MCF 10A (cell line): ENCODE measurements at regions of chr2 and their contacts with region 1.

Region 1: DNA sequence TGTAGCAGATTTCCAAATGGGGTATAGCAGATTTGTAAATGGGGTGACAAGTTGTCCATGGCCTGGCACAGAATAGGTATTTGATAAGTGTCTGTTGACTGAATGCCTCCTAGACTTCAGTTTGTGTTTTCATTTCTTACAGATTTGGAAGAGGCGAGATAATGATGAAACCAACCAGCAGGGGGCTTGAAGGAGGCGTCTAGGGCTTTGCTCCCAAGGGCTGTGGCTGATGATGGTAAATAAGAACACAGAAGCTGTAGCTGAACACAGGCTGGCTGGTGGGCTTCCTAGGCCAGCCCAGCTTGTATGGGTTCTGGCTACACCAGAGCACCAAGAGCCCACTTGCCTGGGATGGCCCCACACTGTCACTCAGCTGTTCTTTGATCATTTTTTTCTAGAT is 19.4 kb downstream of the SFTPB start:
- DNase-seq: peak; percentile 69
- H3K4me3 Mint-ChIP-seq: no peak overlapping the region
- H3K27ac Mint-ChIP-seq: peak overlapping the region; percentile 18
- H3K4me1 Mint-ChIP-seq: peaks cover 10% of the 10 kb centered on the region
- H3K27me3 Mint-ChIP-seq: no peaks in the 10 kb centered on the region
- CTCF ChIP-seq: peak; percentile 20

Region 2: DNA sequence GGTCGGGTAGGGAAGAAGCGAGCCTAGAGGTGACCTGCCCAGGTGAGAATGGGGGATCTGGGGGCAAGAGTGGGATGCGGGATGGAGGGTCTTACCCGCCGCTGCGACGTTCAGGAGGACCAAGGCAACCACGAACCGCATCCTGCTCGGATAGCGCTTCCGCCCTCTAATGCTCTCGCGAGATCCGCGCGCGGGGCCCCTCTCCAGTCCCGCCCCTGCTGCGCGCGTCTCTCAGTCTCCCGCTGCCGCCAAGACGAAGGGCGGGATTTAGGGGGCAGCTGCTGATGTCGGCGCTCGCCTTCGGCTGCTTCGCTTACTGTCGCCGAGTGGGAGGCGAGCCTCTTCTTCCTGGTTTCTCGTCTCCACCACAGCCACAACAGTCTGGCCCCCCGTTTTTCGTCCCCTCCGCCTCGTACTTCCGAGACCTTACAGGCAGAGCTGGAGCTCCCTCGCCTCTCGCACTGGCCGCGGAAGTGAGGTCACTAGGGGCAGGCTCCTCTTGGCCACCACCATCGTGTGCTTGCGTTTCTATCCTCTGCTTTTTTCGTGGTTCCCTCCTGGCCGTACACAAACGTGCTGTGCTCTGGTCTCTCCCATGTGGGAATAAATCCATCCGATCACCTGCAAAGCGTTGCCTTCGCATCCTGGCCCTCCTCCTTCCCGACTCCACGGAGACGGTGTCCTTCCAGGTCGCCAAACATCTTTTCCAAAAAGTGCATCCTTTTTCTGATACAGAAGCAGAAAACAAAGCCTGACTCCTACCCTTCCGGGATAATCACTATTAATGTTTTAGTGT is 320.6 kb before region 1 on chr2 and contains the start of gene TGOLN2:
- CTCF ChIA-PET with region 1: no interaction called
- POLR2A ChIA-PET with region 1: no interaction called
- intact Hi-C with region 1: no loop called
- DNase-seq: peak; percentile 92
- H3K4me3 Mint-ChIP-seq: peak within 1 kb of the TSS; percentile 82
- H3K27ac Mint-ChIP-seq: peak within 1 kb of the TSS; percentile 94
- H3K4me1 Mint-ChIP-seq: peaks cover 16% of the 10 kb centered on the region
- H3K27me3 Mint-ChIP-seq: no peaks in the 10 kb centered on the region
- CTCF ChIP-seq: no peak
- total RNA-seq, gene TGOLN2: 62.9 and 65.5 TPM in 2 replicates

Region 3: DNA sequence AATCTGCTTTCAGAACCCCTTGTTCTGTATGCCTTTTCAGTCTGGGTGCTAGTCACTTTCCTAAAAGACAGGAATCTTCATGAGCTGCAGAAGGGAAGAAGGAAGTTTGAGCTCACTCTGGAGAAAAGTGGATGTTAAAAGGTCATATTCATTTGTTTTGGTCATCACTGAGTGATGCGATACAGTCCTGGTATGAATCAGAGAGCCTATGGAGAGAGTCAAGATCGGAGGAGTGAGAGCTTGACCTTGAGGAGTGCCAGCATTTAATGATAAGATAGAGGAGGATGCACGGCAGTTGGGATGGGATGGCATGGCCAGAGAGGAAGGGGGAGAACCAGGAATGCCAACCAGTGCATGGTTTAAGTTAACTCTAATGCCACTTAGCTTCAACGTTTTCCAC is 13.0 kb before region 1 on chr2:
- CTCF ChIA-PET with region 1: interaction called, 52 read pairs
- POLR2A ChIA-PET with region 1: interaction called, 3 read pairs
- intact Hi-C with region 1: no loop called
- DNase-seq: no peak
- H3K4me3 Mint-ChIP-seq: no peak overlapping the region
- H3K27ac Mint-ChIP-seq: peak overlapping the region; percentile 28
- H3K4me1 Mint-ChIP-seq: peaks cover 13% of the 10 kb centered on the region
- H3K27me3 Mint-ChIP-seq: no peaks in the 10 kb centered on the region
- CTCF ChIP-seq: no peak

Region 4: GRCh38 chr2:85661139-85661858 is 12.7 kb after region 1 on chr2:
- CTCF ChIA-PET with region 1: interaction called, 11 read pairs
- POLR2A ChIA-PET with region 1: interaction called, 3 read pairs
- intact Hi-C with region 1: no loop called
- DNase-seq: no peak
- H3K4me3 Mint-ChIP-seq: no peak overlapping the region
- H3K27ac Mint-ChIP-seq: no peak overlapping the region
- H3K4me1 Mint-ChIP-seq: peaks cover 4% of the 10 kb centered on the region
- H3K27me3 Mint-ChIP-seq: no peaks in the 10 kb centered on the region
- CTCF ChIP-seq: no peak